ENCODE measurements at regions of chr12 and their contacts with region 1.

Region 1: DNA sequence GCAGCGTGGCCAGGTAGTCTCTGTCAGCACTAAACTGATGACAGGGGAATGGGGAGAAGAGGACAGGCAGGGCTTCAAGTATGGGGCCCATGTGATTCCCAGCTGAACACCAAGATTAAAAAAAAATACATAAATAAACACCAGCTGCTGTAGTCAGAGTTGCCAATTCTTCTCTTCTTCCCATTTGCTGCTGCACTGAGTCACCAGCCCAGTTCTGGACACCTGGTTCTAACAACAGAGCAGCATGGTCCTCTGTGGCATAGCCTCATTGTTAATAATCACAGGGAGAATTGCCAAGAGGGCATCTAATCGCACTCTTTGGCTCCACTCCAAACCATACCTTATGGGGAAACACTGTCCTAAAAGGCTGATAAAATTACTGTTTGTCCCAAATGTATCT is 15.1 kb downstream of the PPM1H start:
- DNase-seq: no peak
- ATAC-seq: no peak
- H3K4me3 ChIP-seq: no peak overlapping the region
- H3K4me3 Mint-ChIP-seq: no peak overlapping the region
- H3K27ac ChIP-seq: no peak overlapping the region
- H3K27ac Mint-ChIP-seq: no peak overlapping the region
- H3K4me1 ChIP-seq: no peaks in the 10 kb centered on the region
- H3K4me1 Mint-ChIP-seq: no peaks in the 10 kb centered on the region
- H3K27me3 ChIP-seq: no peaks in the 10 kb centered on the region
- H3K27me3 Mint-ChIP-seq: peaks cover 10% of the 10 kb centered on the region
- CTCF ChIP-seq: no peak

Region 2: GRCh38 chr12:61367281-61367785 is 1552.5 kb before region 1 on chr12:
- CTCF ChIA-PET with region 1: no interaction called
- POLR2A ChIA-PET with region 1: no interaction called
- intact Hi-C with region 1: loop called (anchors 10 kb)
- DNase-seq: no peak
- ATAC-seq: no peak
- H3K4me3 ChIP-seq: no peak overlapping the region
- H3K4me3 Mint-ChIP-seq: no peak overlapping the region
- H3K27ac ChIP-seq: no peak overlapping the region
- H3K27ac Mint-ChIP-seq: no peak overlapping the region
- H3K4me1 ChIP-seq: no peaks in the 10 kb centered on the region
- H3K4me1 Mint-ChIP-seq: no peaks in the 10 kb centered on the region
- H3K27me3 ChIP-seq: no peaks in the 10 kb centered on the region
- H3K27me3 Mint-ChIP-seq: no peaks in the 10 kb centered on the region
- CTCF ChIP-seq: no peak

Region 3: GRCh38 chr12:63450816-63451215 is 531.0 kb after region 1 on chr12:
- CTCF ChIA-PET with region 1: no interaction called
- POLR2A ChIA-PET with region 1: no interaction called
- intact Hi-C with region 1: no loop called
- DNase-seq: no peak
- ATAC-seq: no peak
- H3K4me3 ChIP-seq: no peak overlapping the region
- H3K4me3 Mint-ChIP-seq: no peak overlapping the region
- H3K27ac ChIP-seq: no peak overlapping the region
- H3K27ac Mint-ChIP-seq: no peak overlapping the region
- H3K4me1 ChIP-seq: no peaks in the 10 kb centered on the region
- H3K4me1 Mint-ChIP-seq: no peaks in the 10 kb centered on the region
- H3K27me3 ChIP-seq: no peaks in the 10 kb centered on the region
- H3K27me3 Mint-ChIP-seq: no peaks in the 10 kb centered on the region
- CTCF ChIP-seq: no peak

Measured in B cell (primary cell).